Esophagus squamous epithelium (tissue), 5 donors: ENCODE measurements at regions of chr12 and their contacts with region 1.

Region 1: DNA sequence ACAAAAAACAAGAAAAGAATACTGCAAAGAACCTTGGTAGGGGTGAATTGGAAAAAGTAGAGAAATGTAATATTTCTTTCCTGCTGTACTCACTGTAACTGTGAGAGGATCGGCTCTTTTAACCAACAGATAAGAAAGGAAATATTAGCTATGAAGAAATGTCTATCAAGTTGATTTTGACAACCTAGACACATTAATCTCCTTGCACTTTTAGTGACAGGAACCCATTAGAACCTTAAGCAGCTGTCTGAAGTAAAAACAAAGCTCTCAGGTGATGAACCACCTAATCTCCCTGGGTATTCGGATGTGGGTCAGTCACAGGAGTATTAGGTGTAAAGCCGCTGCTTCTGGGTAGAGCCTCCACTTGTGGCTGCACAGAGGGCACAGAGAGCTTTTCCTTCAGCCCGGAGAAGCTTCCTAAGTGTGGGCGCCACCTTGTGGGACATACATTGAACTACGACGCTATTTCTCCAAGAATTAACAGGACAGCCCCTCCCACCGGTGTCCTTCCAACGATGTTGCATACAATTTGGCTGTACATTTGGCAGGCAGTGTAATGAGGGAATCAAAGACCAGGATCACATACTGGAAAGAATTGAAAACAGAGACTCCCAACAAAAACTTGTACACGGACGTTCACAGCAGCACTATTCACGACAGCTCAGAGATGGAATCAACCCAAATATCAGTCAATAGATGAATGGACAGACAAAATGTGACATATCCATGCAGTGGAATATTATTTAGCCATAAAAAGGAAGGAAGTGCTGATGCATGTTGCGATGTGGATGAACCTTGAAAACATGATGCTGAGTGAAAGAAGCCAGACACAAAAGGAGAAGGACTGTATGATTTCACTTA is 28.9 kb upstream of the MAPKAPK5 start:
- DNase-seq: peak; percentile 10
- H3K4me3 ChIP-seq: no peak overlapping the region
- H3K27ac ChIP-seq: peak overlapping the region in 1 of 4 donors; percentile 30
- H3K4me1 ChIP-seq: peaks cover 0 to 10% (median 0%) of the 10 kb centered on the region in 3 donors
- H3K27me3 ChIP-seq: no peaks in the 10 kb centered on the region
- CTCF ChIP-seq: peak; percentile 71 to 88 (median 85)
- POLR2A ChIP-seq: no peak

Region 2: GRCh38 chr12:111753144-111753881 is 59.8 kb before region 1 on chr12:
- intact Hi-C with region 1: loop called (anchors 5 kb)
- DNase-seq: no peak
- H3K4me3 ChIP-seq: no peak overlapping the region
- H3K27ac ChIP-seq: no peak overlapping the region
- H3K4me1 ChIP-seq: peaks cover 13 to 37% (median 14%) of the 10 kb centered on the region in 3 donors
- H3K27me3 ChIP-seq: no peaks in the 10 kb centered on the region
- CTCF ChIP-seq: peak; percentile 60 to 85 (median 76)
- POLR2A ChIP-seq: no peak